Pancreas (tissue), 10 donors: ENCODE measurements at regions of chr11 and their contacts with region 1.

Region 1: DNA sequence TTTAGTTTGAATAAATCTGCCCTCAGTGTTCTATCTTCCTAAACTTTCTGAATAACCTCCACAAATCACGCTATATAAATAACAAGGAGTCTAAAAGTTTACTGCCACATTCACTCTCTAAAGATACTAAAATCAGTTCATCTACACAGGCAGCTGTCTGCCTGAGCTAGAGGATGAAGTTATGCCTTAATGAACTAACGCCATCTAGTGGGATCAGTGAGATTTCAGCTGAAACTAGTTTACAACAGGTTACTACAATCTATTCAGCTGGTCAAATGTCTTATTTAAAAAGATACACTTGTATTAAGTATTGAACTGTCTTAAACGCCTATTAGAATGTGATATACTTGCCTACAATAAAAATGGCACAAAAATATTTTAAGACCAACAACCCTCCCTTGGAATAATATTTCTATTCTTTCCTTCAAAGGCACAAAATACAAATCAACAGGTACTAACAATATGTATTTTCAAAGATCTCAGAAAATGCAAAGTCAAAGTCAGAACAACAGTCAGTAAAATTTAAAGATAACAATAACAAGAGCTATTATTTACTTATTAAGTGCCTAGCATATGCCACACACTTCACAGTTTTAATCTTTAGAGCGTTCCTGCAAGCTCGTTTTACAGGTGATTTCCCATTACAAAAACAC is 84.1 kb downstream of the LARGE2 start:
- DNase-seq: peak in 3 of 6 donors; percentile 12 to 32 (median 28)
- ATAC-seq: peak; percentile 83 to 97 (median 94)
- H3K4me3 ChIP-seq: no peak overlapping the region
- H3K27ac ChIP-seq: no peak overlapping the region
- H3K4me1 ChIP-seq: no peaks in the 10 kb centered on the region
- H3K27me3 ChIP-seq: no peaks in the 10 kb centered on the region
- CTCF ChIP-seq: peak; percentile 30 to 65 (median 50)

Region 2: GRCh38 chr11:45872513-45873356 is 133.8 kb before region 1 on chr11:
- intact Hi-C with region 1: loop called in 1 of 3 experiments (anchors 10 kb)
- DNase-seq: peak in 3 of 6 donors; percentile 42 to 75 (median 66)
- ATAC-seq: peak; percentile 72 to 97 (median 92)
- H3K4me3 ChIP-seq: no peak overlapping the region
- H3K27ac ChIP-seq: no peak overlapping the region
- H3K4me1 ChIP-seq: no peaks in the 10 kb centered on the region
- H3K27me3 ChIP-seq: no peaks in the 10 kb centered on the region
- CTCF ChIP-seq: peak; percentile 20 to 40 (median 37)

Region 3: GRCh38 chr11:46121724-46122477 is 115.4 kb after region 1 on chr11:
- intact Hi-C with region 1: no loop called
- DNase-seq: peak; percentile 75 to 87 (median 80)
- ATAC-seq: peak; percentile 41 to 67 (median 57)
- H3K4me3 ChIP-seq: peak overlapping the region; percentile 69 to 73 (median 70)
- H3K27ac ChIP-seq: peak overlapping the region; percentile 39 to 93 (median 87)
- H3K4me1 ChIP-seq: peaks cover 0 to 20% (median 13%) of the 10 kb centered on the region in 3 donors
- H3K27me3 ChIP-seq: no peaks in the 10 kb centered on the region
- CTCF ChIP-seq: no peak